Right cardiac atrium (tissue), 5 donors: ENCODE measurements at regions of chr2 and their contacts with region 1.

Region 1: DNA sequence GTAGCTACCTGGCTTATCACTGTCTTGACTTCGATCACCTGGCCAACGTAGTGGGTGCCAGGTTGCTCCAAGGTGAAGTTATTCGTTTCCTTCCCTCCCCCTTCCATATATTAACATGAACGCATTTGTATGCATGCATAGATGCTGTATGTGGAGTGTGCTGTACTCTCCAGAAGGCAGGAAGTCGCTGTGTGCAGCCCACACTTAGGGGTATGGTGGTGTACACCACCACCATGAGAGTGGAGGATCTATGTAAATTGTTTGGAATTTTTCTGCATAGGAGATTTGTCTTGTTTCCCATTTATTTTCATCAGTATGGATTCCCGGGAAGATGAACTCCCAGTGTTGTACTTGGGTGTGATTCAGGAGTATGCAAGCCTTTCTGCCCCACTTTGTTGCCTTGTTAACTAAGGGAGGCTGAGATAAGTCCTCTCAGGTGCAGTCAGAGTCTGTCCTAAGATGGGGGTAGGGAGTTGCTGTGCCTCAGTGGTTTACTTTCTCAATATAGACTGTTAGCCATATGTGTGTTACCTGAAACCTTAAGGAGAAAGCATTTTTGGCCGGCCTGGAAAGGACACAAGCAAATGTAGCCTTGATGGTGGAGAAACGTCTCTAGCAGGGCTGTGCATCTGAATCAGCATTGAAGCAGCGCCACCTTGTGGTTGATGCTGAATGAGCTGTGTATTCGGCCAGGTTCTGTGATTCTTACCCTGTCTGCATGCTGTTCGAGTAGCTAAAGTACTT is 149.8 kb downstream of the TANC1 start:
- DNase-seq: peak; percentile 84 to 96 (median 92)
- ATAC-seq: peak; percentile 87 to 92
- H3K4me3 ChIP-seq: no peak overlapping the region
- H3K27ac ChIP-seq: no peak overlapping the region
- H3K4me1 ChIP-seq: peaks cover 4% of the 10 kb centered on the region
- H3K27me3 ChIP-seq: no peaks in the 10 kb centered on the region

Region 2: DNA sequence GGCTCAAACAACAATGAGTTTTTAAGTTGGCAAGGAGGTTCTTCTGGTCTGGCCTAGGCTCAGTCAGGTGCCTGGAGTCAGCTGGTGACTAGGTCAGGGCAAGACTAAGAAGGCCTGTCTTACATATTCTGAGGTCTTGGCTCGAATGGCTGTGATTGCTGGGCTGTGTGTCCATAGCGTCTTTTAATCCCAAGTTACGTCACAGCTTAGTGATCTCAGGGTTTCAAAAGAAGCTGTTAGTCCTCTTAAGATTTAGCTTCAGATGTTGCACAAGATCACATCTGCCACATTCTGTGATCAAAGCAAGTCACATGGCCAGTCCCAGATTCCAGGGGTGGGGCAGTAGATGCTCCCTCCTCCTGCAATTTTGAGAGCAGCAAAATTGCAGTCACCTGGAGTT is 600.2 kb before region 1 on chr2:
- intact Hi-C with region 1: no loop called
- DNase-seq: peak in 1 of 3 donors; percentile 29
- ATAC-seq: peak; percentile 38 to 67
- H3K4me3 ChIP-seq: no peak overlapping the region
- H3K27ac ChIP-seq: no peak overlapping the region
- H3K4me1 ChIP-seq: no peaks in the 10 kb centered on the region
- H3K27me3 ChIP-seq: no peaks in the 10 kb centered on the region

Region 3: DNA sequence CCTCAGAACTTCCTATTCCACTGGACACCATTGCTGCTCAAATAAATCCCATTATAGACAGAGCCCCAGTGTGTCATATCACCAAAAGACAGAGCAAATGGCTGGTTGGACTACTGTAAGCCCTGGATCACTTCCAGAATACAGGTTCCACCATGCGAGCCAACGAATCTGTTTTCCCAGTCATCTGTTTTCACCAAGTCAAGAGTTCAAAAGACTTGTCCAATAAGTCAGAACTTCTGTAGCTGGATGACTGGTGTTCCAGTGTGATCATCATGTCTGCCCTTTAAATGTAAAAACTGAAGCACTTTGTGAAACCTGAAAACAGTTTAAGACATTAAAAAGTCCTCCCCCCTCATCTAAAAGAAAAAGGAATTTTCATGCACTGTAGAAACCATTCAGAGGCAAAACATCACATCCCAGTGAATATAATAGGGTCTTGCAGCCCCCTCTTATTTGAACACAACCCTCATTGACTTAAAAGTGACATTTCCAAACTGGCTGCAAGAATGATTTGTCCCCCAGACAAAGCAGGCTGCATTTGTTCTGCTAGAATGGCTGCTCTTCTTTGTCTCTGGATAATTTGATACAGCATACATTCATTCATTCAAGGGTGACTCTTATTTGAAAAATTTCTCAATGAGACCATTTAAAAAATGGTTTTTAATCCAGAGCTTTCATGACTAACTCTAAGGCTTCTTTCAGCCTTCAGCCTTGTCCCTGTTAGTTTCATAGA is 214.4 kb before region 1 on chr2:
- intact Hi-C with region 1: loop called (anchors 2 to 5 kb)
- DNase-seq: no peak
- ATAC-seq: no peak
- H3K4me3 ChIP-seq: no peak overlapping the region
- H3K27ac ChIP-seq: no peak overlapping the region
- H3K4me1 ChIP-seq: peaks cover 2% of the 10 kb centered on the region
- H3K27me3 ChIP-seq: no peaks in the 10 kb centered on the region

Region 4: DNA sequence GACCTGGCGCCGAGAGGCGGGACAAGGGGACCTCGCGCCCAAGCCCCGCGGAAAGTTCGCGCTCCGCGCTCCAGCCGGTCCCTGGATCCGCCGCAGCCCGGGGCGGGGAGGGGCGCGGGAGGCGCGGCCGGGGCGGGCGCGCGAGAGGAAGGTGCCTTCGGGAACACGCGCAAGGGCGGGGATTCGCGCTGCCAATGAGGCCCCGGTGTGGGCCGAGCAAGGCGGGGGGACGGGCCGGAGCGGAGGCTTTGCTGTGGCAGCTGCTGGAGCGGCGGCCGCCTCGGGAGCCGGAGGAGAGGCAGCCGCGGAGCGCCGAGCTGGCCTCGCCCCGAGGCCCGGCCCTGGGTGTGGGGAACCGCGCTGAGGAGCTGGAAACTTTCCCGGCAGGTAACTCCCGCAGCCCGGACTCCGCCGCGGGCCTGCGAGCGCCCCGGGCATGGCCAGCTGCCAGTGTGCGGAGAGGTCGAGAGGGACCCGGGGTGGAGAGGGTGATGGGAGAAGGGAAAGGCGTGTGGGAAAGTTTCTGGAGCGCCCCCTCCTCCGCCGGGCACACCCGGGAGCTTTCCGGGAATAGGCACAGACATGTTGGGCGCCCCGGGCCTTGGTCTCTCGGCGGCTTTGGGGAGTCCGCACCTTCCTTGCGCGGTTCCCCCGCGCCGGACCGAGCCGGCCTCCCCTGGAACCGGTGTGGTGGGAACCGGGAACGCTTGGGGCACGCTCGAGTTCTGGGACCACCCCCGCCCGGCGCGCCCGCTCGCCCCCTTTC is 149.7 kb before region 1 on chr2 and contains the start of gene TANC1:
- intact Hi-C with region 1: loop called in 2 of 4 experiments (anchors 5 kb)
- DNase-seq: peak; percentile 96 to 99 (median 98)
- ATAC-seq: peak; percentile 97 to 98
- H3K4me3 ChIP-seq: peak within 1 kb of the TSS; percentile 72
- H3K27ac ChIP-seq: peak within 1 kb of the TSS; percentile 95
- H3K4me1 ChIP-seq: peaks cover 9% of the 10 kb centered on the region
- H3K27me3 ChIP-seq: no peaks in the 10 kb centered on the region
- total RNA-seq, gene TANC1: 44.2 to 75.8 (median 51.1) TPM

Region 5: DNA sequence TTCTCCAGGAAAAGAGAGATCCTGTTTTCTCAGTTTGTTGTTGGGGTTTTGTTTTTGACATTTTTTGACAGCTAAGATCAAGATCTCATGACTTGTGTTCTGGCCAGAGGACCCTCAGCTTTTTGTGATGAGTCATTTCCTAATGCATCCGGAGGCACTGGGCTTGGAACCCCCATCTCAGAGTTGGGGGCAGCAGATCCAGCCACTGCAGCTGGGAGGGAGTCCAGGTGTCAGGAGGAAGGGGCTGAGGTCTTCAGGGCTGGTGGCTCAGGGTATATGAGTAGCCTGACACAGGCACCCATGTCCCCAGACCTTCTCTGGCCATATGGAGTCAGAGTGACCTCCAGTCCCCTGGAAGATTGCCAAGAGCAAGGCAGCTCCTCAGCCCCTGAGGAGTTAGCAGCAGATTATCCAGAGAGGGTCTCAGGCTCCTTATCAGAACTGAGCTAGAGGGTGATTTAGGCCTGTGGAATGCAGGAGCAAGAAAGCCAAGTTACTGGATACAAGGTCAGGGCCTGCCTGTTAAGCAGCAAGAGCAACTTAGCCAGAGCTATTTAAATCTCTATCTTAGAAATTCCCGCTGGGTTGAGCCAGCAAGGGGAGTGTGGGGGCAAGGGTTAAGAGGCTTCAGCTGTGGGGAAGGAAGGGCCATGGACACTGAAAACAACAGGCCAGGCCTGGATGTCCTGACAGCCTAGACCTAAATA is 87.5 kb before region 1 on chr2:
- intact Hi-C with region 1: loop called in 2 of 4 experiments (anchors 5 to 10 kb)
- DNase-seq: peak; percentile 69 to 85 (median 78)
- ATAC-seq: peak; percentile 94
- H3K4me3 ChIP-seq: no peak overlapping the region
- H3K27ac ChIP-seq: peak overlapping the region; percentile 83
- H3K4me1 ChIP-seq: peaks cover 37% of the 10 kb centered on the region
- H3K27me3 ChIP-seq: no peaks in the 10 kb centered on the region

Region 6: GRCh38 chr2:159035790-159036411 is 82.4 kb before region 1 on chr2:
- intact Hi-C with region 1: loop called in 3 of 4 experiments (anchors 5 to 10 kb)
- DNase-seq: no peak
- ATAC-seq: peak; percentile 33 to 42
- H3K4me3 ChIP-seq: no peak overlapping the region
- H3K27ac ChIP-seq: peak overlapping the region; percentile 70
- H3K4me1 ChIP-seq: peaks cover 29% of the 10 kb centered on the region
- H3K27me3 ChIP-seq: no peaks in the 10 kb centered on the region

Region 7: GRCh38 chr2:159044804-159045286 is 73.4 kb before region 1 on chr2:
- intact Hi-C with region 1: loop called in 1 of 4 experiments (anchors 10 kb)
- DNase-seq: peak; percentile 51 to 78 (median 76)
- ATAC-seq: peak; percentile 64 to 75
- H3K4me3 ChIP-seq: no peak overlapping the region
- H3K27ac ChIP-seq: peak overlapping the region; percentile 61
- H3K4me1 ChIP-seq: peaks cover 33% of the 10 kb centered on the region
- H3K27me3 ChIP-seq: no peaks in the 10 kb centered on the region